ENCODE measurements at regions of chr20 and their contacts with region 1.

Region 1: GRCh38 chr20:4740774-4741431 is 19.2 kb downstream of the PRND start:
- DNase-seq: no peak
- H3K4me3 ChIP-seq: no peak overlapping the region
- H3K27me3 ChIP-seq: 0 out of 2 replicates have a peak, but pooled peaks cover 1% of the 10 kb centered on the region
- CTCF ChIP-seq: peak; percentile 81

Region 2: DNA sequence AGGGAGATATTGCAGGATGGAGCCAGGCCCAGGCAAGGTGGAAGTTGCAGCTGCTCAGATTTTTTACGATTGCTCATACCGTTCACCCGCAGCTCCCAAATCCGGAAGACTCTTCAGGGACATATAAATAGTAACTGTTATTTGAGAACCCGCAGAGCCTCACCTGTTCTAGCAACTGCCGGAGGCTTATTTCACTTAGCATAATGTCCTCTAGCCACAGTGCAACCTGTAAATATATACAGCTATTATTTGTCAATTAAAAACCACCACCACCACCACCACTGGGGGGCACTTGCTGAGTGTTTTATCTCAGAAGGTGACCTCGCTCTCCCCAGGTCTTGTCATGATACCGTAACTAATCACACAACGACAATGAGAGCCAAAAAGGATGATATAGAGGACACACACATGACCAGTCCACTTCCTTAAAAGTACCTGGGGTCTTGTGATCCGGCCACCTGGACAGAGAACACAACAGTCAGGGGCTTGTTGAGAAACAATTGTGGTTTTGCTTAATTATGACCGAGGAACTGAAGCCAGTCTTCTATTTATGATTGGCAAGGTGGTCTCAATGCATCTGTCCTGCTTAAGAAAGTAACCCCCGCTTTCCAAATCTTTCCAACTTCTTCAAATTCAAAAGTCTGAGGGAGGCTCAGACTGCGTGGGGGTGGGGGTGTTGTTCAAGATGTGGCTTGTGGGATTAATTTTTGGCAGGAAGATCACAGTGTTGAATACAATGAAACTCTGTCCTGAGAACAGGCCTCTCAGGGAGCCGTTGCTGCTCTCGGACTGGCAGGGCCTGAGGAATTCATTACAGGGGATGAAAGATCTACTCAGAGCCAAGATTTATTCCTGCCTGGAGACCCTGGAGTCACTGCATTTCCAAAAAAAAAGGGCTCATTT is 126.9 kb before region 1 on chr20:
- CTCF ChIA-PET with region 1: interaction called, 17 read pairs
- POLR2A ChIA-PET with region 1: no interaction called
- DNase-seq: no peak
- H3K4me3 ChIP-seq: no peak overlapping the region
- H3K27me3 ChIP-seq: no peaks in the 10 kb centered on the region
- CTCF ChIP-seq: peak; percentile 52

Region 3: DNA sequence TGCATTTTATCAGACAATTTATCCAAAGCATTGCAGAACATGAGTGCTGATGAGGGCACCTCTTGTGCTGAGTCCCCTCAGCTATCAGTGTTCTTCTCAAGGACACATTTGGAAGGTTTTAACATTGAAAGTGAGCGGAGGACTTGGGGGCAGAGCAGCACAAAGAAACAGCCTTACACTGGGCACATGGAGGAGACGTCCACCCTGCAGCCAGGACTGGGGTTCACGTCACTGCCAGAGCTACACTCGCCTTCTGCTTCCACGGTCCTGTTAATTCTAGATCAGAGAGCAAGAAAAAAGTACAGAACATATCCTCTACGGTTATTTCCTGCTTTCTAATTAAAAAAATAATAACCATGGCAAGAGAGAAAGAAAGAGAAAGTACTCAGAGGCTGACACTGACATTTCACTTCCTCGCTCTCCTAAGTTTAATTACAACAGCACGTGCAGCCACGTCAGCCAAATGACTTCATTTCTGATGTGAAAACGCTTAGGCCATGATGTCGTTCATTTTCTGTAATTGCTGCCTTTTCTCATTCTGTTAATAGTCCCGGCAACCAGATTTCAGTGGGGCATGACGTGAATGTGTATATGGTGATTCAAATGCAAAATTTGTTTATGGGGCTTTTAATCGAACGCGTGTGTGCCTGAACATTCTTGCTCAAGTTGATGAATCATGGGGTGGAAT is 14.0 kb before region 1 on chr20:
- CTCF ChIA-PET with region 1: interaction called, 66 read pairs
- POLR2A ChIA-PET with region 1: no interaction called
- DNase-seq: peak; percentile 64
- H3K4me3 ChIP-seq: peak overlapping the region; percentile 4
- H3K27me3 ChIP-seq: peaks cover 3% of the 10 kb centered on the region
- CTCF ChIP-seq: no peak